ENCODE measurements at regions of chr15 and their contacts with region 1.

Region 1: DNA sequence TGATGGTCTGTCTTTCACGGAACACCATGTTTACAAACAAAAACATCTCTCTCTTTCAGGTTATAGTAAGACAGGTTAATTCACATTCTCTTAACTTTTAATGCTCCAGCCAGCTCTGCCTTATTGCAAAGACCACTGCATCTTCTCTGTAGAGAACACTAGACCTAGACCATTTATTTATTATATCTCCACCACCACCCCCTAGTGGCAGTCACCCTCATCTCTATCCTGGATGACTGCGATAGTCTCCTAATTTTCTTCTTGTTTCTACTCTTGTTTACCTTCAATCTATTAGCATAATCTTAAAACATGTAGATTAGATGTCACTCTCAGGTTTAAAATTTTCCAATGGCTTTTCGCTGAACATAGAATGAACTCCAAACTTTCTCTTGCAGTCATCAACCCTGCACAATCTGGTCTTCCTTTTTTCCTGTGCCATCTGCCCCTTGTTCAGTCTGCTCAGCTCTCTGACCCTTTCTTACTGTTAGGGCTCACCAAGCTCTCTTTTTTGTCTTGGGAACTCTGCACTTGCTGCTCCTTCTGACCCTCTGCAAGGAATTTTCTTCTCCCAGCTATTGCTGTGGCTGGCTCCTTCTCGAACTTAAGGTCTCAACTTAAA is 155.6 kb downstream of the SQOR start:
- DNase-seq: peak; percentile 42
- ATAC-seq: peak; percentile 90
- H3K4me3 Mint-ChIP-seq: no peak overlapping the region
- H3K27ac Mint-ChIP-seq: no peak overlapping the region
- H3K4me1 Mint-ChIP-seq: peaks cover 4% of the 10 kb centered on the region
- H3K27me3 Mint-ChIP-seq: no peaks in the 10 kb centered on the region; the same call in 1 of the 2 replicates
- CTCF ChIP-seq: peak; percentile 35

Region 2: DNA sequence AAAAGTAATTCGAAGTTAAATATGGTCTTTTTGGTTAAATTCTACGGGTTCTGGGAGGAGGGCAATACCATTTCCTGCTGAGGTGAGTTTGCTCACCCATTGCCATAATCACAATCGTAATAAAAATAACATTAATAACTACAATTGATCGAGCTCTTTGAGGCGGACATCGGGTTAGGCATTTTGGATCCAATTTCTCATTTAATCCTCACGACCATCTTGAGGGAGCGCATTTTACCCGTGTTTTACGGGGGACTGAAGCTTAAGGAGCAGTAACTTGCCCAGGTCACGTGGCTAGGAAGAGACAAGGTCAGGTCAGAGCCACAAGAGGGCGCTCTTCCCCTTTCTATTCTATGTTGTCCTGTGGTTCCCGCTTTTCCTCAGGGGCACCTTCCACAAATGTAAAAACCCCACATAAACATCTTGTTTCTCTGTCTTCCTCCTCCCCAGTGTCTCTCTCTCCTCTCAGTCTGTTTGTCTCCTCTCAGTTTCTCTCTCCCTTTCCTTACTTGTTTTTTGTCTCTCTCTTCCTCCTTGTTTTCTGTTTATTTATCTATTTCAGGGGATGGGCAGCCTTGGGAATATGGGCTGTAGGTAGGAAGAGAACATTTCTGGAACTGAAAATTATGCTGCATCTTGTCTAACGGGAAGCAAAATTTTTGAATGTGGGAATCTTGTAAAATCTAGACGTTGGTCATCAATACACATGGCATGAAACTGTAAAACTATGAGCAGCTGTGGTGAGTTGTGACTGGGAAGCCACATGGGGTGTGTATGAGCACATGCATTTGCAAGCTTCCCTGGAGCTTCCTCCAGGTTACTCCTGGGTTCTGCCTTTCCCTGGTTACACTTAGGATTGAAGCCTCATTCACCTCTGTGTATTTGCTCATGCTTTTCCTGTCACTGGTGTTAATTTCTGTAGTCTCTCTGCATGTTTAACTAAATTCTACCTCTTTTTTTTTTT is 84.6 kb before region 1 on chr15:
- CTCF ChIA-PET with region 1: interaction called, 66 read pairs
- POLR2A ChIA-PET with region 1: interaction called, 4 read pairs
- DNase-seq: peak; percentile 78
- ATAC-seq: peak; percentile 38
- H3K4me3 Mint-ChIP-seq: peak overlapping the region; percentile 84
- H3K27ac Mint-ChIP-seq: peak overlapping the region; percentile 41
- H3K4me1 Mint-ChIP-seq: peaks cover 14% of the 10 kb centered on the region
- H3K27me3 Mint-ChIP-seq: peaks cover 19% of the 10 kb centered on the region
- CTCF ChIP-seq: peak; percentile 95

Region 3: DNA sequence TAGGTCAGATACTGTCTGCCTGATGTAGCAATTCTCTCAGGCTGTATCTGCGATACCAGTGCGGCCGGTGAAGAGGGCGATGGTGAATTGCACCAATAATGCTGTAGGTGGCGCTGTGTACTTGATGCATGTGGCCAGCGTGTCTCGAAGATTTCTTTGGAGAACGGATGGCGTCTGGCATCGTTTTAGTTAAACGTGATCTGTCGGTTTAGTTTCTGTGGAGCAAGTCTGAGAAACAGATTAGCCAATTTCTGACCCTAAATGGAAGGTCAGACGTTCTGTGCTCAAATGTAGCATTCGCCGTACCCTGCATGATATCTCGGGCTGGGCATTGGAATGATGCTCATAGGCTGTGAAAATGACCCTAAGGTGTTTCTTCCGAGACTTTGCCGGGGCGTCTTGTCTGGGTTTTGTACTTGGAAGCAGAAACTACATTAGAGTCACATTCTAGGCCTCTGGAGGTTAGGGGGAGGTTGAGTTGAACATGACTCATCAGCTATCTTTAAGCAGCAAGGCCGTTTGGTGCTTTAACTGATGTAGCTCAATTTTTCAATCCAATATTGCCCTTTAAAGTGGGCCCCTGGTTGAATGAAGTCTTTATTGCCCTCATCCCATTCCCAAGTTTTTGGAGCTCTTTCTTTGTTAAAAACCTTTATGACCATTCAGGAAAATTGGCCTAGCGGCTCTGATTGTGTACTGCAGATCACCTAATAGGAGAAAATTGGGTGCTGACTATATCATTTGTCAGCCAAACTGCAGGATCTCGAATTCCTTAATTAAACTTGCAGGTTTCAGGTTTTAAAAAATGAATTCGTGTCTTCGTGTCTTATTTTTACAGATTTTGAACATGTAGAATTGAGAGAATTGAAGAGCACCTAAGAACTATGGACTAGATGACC is 75.6 kb before region 1 on chr15:
- CTCF ChIA-PET with region 1: interaction called, 37 read pairs
- POLR2A ChIA-PET with region 1: no interaction called
- DNase-seq: peak; percentile 81
- ATAC-seq: peak; percentile 89
- H3K4me3 Mint-ChIP-seq: no peak overlapping the region
- H3K27ac Mint-ChIP-seq: no peak overlapping the region
- H3K4me1 Mint-ChIP-seq: peaks cover 8% of the 10 kb centered on the region
- H3K27me3 Mint-ChIP-seq: no peaks in the 10 kb centered on the region
- CTCF ChIP-seq: peak; percentile 92

Region 4: DNA sequence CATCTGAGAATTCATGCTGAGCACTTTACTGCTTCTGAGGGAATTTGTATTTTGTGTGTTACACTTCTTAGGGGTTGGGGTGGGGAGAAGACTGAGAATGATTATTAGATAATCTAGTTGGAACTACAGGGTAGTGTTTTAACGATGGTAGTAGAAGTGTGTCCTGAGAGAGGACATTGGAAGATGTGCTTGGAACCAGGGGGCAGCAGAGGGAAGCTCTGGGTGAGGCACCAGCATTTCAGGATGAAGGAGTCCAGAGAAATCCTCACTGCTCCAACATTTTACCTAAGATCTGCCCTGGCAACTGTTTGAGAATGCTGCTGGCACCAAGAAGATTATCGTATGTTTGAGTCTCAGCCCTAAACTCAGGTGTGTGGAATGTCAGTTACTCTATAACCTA is 10.1 kb before region 1 on chr15:
- CTCF ChIA-PET with region 1: interaction called, 23 read pairs
- POLR2A ChIA-PET with region 1: no interaction called
- DNase-seq: peak; percentile 19
- ATAC-seq: peak; percentile 75
- H3K4me3 Mint-ChIP-seq: no peak overlapping the region
- H3K27ac Mint-ChIP-seq: no peak overlapping the region
- H3K4me1 Mint-ChIP-seq: peaks cover 25% of the 10 kb centered on the region
- H3K27me3 Mint-ChIP-seq: no peaks in the 10 kb centered on the region
- CTCF ChIP-seq: no peak

Region 5: DNA sequence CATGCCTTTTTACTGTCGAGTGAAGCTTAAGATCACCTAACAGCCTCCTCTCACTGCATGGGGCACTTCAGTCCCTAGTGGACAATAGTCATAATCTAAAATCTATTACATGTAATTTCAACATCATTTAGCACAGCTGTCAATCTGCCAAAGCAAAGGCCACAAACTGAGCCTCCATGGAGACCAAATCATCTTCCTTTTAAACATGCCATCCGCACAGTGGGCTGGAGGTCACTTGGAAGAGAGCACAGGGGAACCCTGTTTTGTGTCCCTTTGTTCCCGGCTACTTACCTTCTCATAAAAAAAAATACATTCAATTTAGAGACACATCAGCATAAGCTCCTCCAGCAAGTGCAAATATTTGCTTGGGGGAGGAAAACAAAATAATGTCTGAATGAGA is 11.7 kb after region 1 on chr15:
- CTCF ChIA-PET with region 1: interaction called, 12 read pairs
- POLR2A ChIA-PET with region 1: no interaction called
- DNase-seq: no peak
- ATAC-seq: no peak
- H3K4me3 Mint-ChIP-seq: no peak overlapping the region
- H3K27ac Mint-ChIP-seq: no peak overlapping the region
- H3K4me1 Mint-ChIP-seq: peaks cover 2% of the 10 kb centered on the region; the same call in 1 of the 2 replicates
- H3K27me3 Mint-ChIP-seq: no peaks in the 10 kb centered on the region; the same call in 1 of the 2 replicates
- CTCF ChIP-seq: no peak